ENCODE measurements at regions of chr3 and their contacts with region 1.

Region 1: DNA sequence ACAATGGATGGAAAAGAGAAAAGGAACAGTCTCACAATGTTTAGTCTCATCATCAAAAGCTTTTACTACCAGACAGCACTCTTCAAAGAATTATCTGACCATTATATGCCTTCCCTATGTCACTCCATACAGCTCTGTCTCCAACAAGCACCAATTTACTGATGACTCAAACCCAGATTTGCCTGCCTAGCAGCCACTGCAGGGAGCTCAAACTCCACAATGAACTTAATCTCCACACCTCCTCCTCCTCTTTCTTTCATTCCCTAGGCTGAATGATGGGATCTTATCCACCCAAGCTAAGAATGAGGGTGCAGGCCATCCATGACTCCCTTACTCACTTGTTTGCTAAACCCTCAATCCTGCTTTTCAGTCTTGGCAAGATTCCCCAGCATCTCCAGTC is 45.5 kb downstream of the NBEAL2 start:
- DNase-seq: no peak
- ATAC-seq: peak; percentile 39; the same call in 2 of the 3 replicates
- H3K4me3 ChIP-seq: no peak overlapping the region
- H3K27ac ChIP-seq: no peak overlapping the region
- H3K4me1 ChIP-seq: 0 out of 2 replicates have a peak, but pooled peaks cover 3% of the 10 kb centered on the region
- H3K27me3 ChIP-seq: no peaks in the 10 kb centered on the region
- CTCF ChIP-seq: peak in 1 of 3 experiments; percentile 22; a peak in 1 of 6 replicates
- EP300 ChIP-seq: no peak
- POLR2A ChIP-seq: no peak
- RAD21 ChIP-seq: no peak

Region 2: DNA sequence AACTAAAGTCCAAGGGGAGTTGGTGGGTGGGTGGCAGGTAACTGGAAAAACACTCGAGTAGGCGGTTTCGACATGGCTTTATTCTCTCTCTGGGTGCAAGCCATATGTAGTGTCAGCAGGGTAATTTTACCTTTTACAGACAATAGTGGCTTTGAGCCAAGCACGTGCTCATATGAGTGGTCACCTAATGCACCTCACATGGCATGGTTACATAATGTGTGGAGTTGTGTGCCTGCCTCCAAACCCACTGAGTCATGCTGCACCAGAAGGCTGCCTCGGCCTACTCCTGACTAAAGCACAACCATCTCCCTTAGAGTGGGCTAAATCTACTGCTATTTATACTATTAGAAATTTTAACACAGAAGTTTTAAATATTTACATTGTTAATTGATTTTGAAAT is 601.3 kb before region 1 on chr3:
- CTCF ChIA-PET with region 1: no interaction called
- POLR2A ChIA-PET with region 1: no interaction called
- RAD21 ChIA-PET with region 1: no interaction called
- SMC1A ChIA-PET with region 1: no interaction called
- in situ Hi-C with region 1: no loop called
- intact Hi-C with region 1: no loop called
- DNase-seq: no peak
- ATAC-seq: no peak
- H3K4me3 ChIP-seq: no peak overlapping the region
- H3K27ac ChIP-seq: no peak overlapping the region
- H3K4me1 ChIP-seq: no peaks in the 10 kb centered on the region
- H3K27me3 ChIP-seq: no peaks in the 10 kb centered on the region; a peak in 1 of 4 replicates
- CTCF ChIP-seq: no peak
- EP300 ChIP-seq: no peak
- POLR2A ChIP-seq: no peak
- RAD21 ChIP-seq: no peak

Region 3: GRCh38 chr3:47042231-47042791 is 17.4 kb after region 1 on chr3:
- CTCF ChIA-PET with region 1: interaction called, 4 read pairs
- POLR2A ChIA-PET with region 1: interaction called, 5 read pairs
- RAD21 ChIA-PET with region 1: no interaction called
- SMC1A ChIA-PET with region 1: interaction called, 23 read pairs
- in situ Hi-C with region 1: no loop called
- intact Hi-C with region 1: no loop called
- DNase-seq: no peak
- ATAC-seq: no peak
- H3K4me3 ChIP-seq: no peak overlapping the region
- H3K27ac ChIP-seq: no peak overlapping the region
- H3K4me1 ChIP-seq: no peaks in the 10 kb centered on the region
- H3K27me3 ChIP-seq: no peaks in the 10 kb centered on the region
- CTCF ChIP-seq: no peak
- EP300 ChIP-seq: no peak
- POLR2A ChIP-seq: no peak
- RAD21 ChIP-seq: no peak